Calu3 (cell line): ENCODE measurements at regions of chr17 and their contacts with region 1.

Region 1: GRCh38 chr17:40854159-40854814 is 12.7 kb downstream of the KRT12 start:
- DNase-seq: no peak
- H3K4me3 Mint-ChIP-seq: peak overlapping the region; percentile 33
- H3K27ac Mint-ChIP-seq: peak overlapping the region; percentile 86
- H3K4me1 Mint-ChIP-seq: peaks cover 85% of the 10 kb centered on the region
- H3K27me3 Mint-ChIP-seq: no peaks in the 10 kb centered on the region
- CTCF ChIP-seq: no peak

Region 2: DNA sequence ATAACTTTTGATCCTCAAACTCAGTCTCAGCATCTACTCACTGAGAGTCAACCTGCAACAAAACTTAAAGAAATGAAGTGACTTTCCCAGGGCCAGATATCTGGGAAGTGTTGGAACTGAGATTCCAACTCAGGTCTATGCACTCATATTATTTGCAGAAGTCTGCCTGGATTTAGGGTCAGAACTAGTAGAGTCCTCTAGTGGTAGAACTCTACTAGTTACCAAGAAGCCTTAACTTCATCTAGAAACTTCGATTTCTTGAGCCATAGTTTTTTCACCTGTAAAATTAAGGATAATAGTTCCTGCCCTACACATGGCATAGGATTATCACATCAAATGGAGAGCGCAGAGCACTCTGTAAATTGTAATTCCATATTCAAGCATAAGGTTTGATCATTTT is 127.4 kb before region 1 on chr17:
- CTCF ChIA-PET with region 1: interaction called, 9 read pairs
- intact Hi-C with region 1: loop called (anchors 1 kb)
- DNase-seq: peak; percentile 45
- H3K4me3 Mint-ChIP-seq: no peak overlapping the region
- H3K27ac Mint-ChIP-seq: no peak overlapping the region
- H3K4me1 Mint-ChIP-seq: peaks cover 19% of the 10 kb centered on the region
- H3K27me3 Mint-ChIP-seq: peaks cover 54% of the 10 kb centered on the region
- CTCF ChIP-seq: no peak

Region 3: DNA sequence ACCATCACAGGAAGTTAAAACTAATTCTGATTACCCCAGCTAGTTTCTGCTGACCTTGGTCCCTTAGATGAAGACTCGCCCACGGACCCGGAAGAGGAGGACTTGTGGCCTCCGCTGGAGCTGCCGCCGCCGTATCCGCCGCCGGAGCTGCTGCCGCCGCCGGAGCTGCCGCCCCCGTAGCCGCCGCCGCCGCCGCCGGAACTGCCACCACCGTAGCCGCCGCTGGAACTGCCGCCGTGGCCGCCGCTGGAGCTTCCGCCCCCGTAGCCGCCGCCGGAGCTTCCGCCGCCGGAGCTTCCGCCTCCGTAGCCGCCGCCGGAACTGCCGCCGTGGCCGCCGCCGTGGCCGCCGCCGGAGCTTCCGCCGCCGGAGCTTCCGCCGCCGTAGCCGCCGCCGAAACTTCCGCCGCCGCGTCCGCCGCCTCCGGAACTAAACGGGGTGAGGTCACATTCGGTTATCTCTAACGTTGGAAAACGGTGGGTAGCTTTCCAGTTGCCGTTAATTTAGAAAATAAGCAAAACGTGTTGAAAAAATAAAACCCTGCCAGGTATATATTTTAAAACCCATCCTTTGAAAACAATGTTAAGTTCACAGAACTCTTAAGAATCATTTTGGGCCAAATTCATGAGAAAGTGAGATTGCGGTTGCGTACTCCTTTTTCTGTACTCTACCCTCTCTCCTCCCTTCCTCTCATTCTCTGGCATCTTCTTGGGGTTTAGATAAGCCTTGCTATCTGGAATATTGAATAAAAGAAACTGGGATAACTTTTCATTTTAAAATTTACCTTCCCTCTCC is 35.4 kb before region 1 on chr17:
- CTCF ChIA-PET with region 1: interaction called, 31 read pairs
- intact Hi-C with region 1: loop called (anchors 1 kb)
- DNase-seq: peak; percentile 100
- H3K4me3 Mint-ChIP-seq: peak overlapping the region; percentile 80
- H3K27ac Mint-ChIP-seq: peak overlapping the region; percentile 92
- H3K4me1 Mint-ChIP-seq: peaks cover 31% of the 10 kb centered on the region
- H3K27me3 Mint-ChIP-seq: no peaks in the 10 kb centered on the region
- CTCF ChIP-seq: no peak

Region 4: DNA sequence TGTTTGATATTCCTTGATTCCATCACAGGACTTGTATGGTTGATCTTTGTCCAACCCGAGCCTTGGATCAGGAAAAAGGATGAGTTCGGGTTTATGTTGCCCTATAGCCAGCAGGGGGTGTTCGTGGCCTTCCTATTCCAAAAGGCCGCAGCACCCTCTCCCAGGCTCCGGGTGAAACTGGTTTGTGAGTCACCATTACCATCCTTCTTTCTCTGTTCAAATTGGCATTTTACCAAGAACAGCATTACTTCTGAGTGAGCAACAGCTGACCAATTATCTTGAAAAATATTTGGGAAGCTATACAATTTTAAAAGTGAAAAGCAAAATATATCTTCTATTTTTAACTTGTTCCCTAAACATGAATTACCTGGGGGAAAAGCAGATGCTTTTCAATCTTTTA is 55.1 kb after region 1 on chr17:
- CTCF ChIA-PET with region 1: interaction called, 68 read pairs
- intact Hi-C with region 1: loop called (anchors 1 kb)
- DNase-seq: peak; percentile 99
- H3K4me3 Mint-ChIP-seq: no peak overlapping the region
- H3K27ac Mint-ChIP-seq: peak overlapping the region; percentile 86
- H3K4me1 Mint-ChIP-seq: peaks cover 94% of the 10 kb centered on the region
- H3K27me3 Mint-ChIP-seq: no peaks in the 10 kb centered on the region
- CTCF ChIP-seq: peak; percentile 98

Region 5: GRCh38 chr17:40926341-40926740 is 72.1 kb after region 1 on chr17:
- CTCF ChIA-PET with region 1: no interaction called
- intact Hi-C with region 1: no loop called
- DNase-seq: no peak
- H3K4me3 Mint-ChIP-seq: peak overlapping the region; percentile 0
- H3K27ac Mint-ChIP-seq: peak overlapping the region; percentile 54
- H3K4me1 Mint-ChIP-seq: peaks cover 61% of the 10 kb centered on the region
- H3K27me3 Mint-ChIP-seq: no peaks in the 10 kb centered on the region
- CTCF ChIP-seq: no peak

Region 6: DNA sequence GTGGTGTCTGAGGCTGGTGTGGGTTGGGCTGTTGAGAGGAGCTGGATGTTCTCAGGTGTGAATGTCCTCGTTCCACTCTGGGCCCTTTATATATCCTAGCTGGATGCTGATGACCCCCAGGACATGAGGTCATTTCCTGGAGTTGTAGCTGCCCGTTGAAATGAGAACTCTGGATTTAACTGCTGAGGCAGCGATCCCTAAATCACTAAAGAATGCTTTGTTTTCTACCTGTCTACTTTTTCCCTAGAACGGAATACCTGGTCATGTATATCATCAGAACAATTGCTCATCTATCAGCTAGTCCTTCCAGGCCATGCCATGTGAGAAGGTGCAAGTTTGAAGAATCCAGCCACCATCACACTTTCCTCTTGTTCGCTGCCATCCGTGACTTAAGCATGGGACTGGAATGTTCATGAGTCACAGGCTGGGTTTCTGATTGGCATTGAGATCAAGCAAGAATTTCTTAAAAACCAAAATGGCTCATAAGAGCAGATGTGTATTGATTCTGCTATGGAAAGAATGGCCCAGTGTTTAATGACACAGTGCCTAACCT is 205.8 kb after region 1 on chr17 and contains the start of gene KRTAP2-3:
- CTCF ChIA-PET with region 1: no interaction called
- intact Hi-C with region 1: loop called (anchors 5 kb)
- DNase-seq: peak; percentile 90
- H3K4me3 Mint-ChIP-seq: peak within 1 kb of the TSS; percentile 33
- H3K27ac Mint-ChIP-seq: peak within 1 kb of the TSS; percentile 88
- H3K4me1 Mint-ChIP-seq: peaks cover 54% of the 10 kb centered on the region
- H3K27me3 Mint-ChIP-seq: no peaks in the 10 kb centered on the region
- CTCF ChIP-seq: no peak
- total RNA-seq, gene KRTAP2-3: 9.4 and 18.2 TPM in 2 replicates

Region 7: GRCh38 chr17:41496820-41497408 is 642.6 kb after region 1 on chr17:
- CTCF ChIA-PET with region 1: interaction called, 3 read pairs
- intact Hi-C with region 1: loop called (anchors 5 kb)
- DNase-seq: peak; percentile 97
- H3K4me3 Mint-ChIP-seq: no peak overlapping the region
- H3K27ac Mint-ChIP-seq: peak overlapping the region; percentile 40
- H3K4me1 Mint-ChIP-seq: peaks cover 77% of the 10 kb centered on the region
- H3K27me3 Mint-ChIP-seq: no peaks in the 10 kb centered on the region
- CTCF ChIP-seq: peak; percentile 96